Activated CD4-positive, alpha-beta T cell treated with anti-CD3 and anti-CD28 coated beads, Interleukin-2, amount 10 ng/mL, durations not matched to agents 7 days and 5 days (primary cell): ENCODE measurements at regions of chr1 and their contacts with region 1.

Region 1: GRCh38 chr1:114282751-114283403 is 129.2 kb upstream of the SYT6 start:
- DNase-seq: peak; percentile 91
- H3K4me3 Mint-ChIP-seq: no peak overlapping the region
- H3K27ac Mint-ChIP-seq: no peak overlapping the region
- H3K4me1 Mint-ChIP-seq: no peaks in the 10 kb centered on the region
- H3K27me3 Mint-ChIP-seq: peaks cover 3% of the 10 kb centered on the region

Region 2: GRCh38 chr1:114270282-114270681 is 12.6 kb before region 1 on chr1:
- CTCF ChIA-PET with region 1: interaction called, 13 read pairs
- POLR2A ChIA-PET with region 1: no interaction called
- DNase-seq: no peak
- H3K4me3 Mint-ChIP-seq: no peak overlapping the region
- H3K27ac Mint-ChIP-seq: no peak overlapping the region
- H3K4me1 Mint-ChIP-seq: peaks cover 5% of the 10 kb centered on the region
- H3K27me3 Mint-ChIP-seq: peaks cover 28% of the 10 kb centered on the region